WTC11 (cell line): ENCODE measurements at regions of chrX and their contacts with region 1.

Region 1: GRCh38 chrX:103356130-103356798 is at the start of gene TCEAL9:
- DNase-seq: peak; percentile 36
- ATAC-seq: peak; percentile 78
- H3K4me3 Mint-ChIP-seq: peak within 1 kb of the TSS; percentile 94
- H3K27ac Mint-ChIP-seq: peak within 1 kb of the TSS; percentile 98
- H3K4me1 Mint-ChIP-seq: peaks cover 7% of the 10 kb centered on the region
- H3K27me3 Mint-ChIP-seq: peaks cover 3% of the 10 kb centered on the region; the same call in 1 of the 2 replicates
- CTCF ChIP-seq: no peak
- total RNA-seq, gene TCEAL9: 30.4 to 35.0 TPM (median 30.7 TPM) in 3 replicates

Region 2: GRCh38 chrX:103376118-103376978 is 20.1 kb after region 1 on chrX and contains the start of gene BEX3:
- CTCF ChIA-PET with region 1: no interaction called
- POLR2A ChIA-PET with region 1: interaction called, 25 read pairs
- DNase-seq: peak; percentile 68
- ATAC-seq: peak; percentile 90
- H3K4me3 Mint-ChIP-seq: peak within 1 kb of the TSS; percentile 76
- H3K27ac Mint-ChIP-seq: peak within 1 kb of the TSS; percentile 97
- H3K4me1 Mint-ChIP-seq: peaks cover 12% of the 10 kb centered on the region
- H3K27me3 Mint-ChIP-seq: no peaks in the 10 kb centered on the region
- CTCF ChIP-seq: no peak
- total RNA-seq, gene BEX3: 263 to 292 TPM (median 277 TPM) in 3 replicates

Region 3: GRCh38 chrX:103404231-103405208 is 48.3 kb after region 1 on chrX:
- CTCF ChIA-PET with region 1: no interaction called
- POLR2A ChIA-PET with region 1: interaction called, 10 read pairs
- DNase-seq: peak; percentile 71
- ATAC-seq: peak; percentile 90
- H3K4me3 Mint-ChIP-seq: peak overlapping the region; percentile 88
- H3K27ac Mint-ChIP-seq: peak overlapping the region; percentile 80
- H3K4me1 Mint-ChIP-seq: peaks cover 18% of the 10 kb centered on the region
- H3K27me3 Mint-ChIP-seq: peaks cover 45% of the 10 kb centered on the region
- CTCF ChIP-seq: no peak